Activated CD4-positive, alpha-beta T cell treated with anti-CD3 and anti-CD28 coated beads, Interleukin-2, amount 10 ng/mL, durations not matched to agents 24 days and 14 days (primary cell): ENCODE measurements at regions of chr12 and their contacts with region 1.

Region 1: DNA sequence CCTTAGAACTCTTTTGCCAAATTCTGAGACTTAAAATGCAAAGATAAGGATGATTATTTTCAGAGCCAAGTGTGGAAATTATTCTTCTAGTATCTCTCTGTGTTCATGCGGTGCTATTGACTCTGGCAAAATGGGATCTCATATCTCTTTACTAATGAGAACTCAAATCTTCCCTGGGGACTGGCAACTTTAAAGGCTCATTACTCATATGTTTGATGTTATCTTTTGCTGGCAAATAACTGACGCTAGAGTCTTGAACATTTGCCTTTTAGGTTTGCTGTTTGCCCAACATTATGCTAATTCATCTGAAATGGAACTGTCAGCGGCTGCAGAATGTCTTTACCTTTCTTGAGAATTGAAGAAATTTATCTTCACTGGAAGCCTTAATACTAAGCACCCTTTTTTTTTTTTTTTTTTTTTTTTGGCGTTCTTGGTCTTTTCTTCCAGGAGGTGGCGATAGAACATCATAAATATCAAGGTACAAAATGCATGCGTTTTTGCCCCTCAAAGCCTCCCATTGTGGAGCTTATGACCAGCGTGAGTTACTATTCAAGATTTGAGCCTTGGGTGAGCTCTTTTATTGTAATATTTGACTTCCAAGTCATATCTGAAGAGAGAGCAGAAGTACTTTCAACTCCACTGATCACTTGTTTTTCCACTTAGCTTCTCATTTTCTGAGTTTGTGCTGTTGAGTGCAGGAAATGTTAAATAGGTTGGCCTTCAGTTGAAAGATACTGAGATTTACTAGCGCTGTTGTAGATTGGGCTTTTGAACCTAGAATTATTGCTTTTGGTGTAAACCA is 86.6 kb downstream of the CAND1 start:
- DNase-seq: peak; percentile 71
- H3K4me3 Mint-ChIP-seq: no peak overlapping the region
- H3K27ac Mint-ChIP-seq: no peak overlapping the region
- H3K4me1 Mint-ChIP-seq: peaks cover 15% of the 10 kb centered on the region
- H3K27me3 Mint-ChIP-seq: no peaks in the 10 kb centered on the region

Region 2: DNA sequence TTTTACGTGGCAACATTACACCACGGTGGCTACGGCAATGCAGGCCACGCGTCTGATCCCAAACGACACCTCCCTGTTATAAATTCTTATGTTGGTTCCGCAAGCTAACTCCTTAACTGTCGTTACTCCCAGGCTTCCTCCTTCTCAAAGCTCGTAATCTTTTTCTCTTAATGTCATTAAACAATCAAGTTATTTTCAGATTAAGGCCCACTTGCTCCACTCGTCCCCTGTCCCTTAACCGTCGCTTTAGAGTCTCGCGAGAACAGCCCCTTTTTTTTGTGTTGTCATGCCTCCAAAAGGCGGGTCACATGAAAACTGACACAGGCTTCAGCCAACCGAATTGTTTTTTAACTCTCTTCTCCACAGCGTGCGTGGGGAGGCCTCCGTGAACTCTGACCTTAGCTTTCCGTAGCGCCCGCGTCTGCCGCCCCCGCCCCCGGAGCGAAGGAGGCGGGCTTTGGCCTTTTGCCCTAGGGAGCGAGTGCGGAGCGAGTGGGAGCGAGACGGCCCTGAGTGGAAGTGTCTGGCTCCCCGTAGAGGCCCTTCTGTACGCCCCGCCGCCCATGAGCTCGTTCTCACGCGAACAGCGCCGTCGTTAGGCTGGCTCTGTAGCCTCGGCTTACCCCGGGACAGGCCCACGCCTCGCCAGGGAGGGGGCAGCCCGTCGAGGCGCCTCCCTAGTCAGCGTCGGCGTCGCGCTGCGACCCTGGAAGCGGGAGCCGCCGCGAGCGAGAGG is 86.7 kb before region 1 on chr12 and contains the start of gene CAND1:
- intact Hi-C with region 1: loop called (anchors 1 kb)
- DNase-seq: peak; percentile 99
- H3K4me3 Mint-ChIP-seq: peak within 1 kb of the TSS; percentile 90
- H3K27ac Mint-ChIP-seq: peak within 1 kb of the TSS; percentile 100
- H3K4me1 Mint-ChIP-seq: peaks cover 30% of the 10 kb centered on the region
- H3K27me3 Mint-ChIP-seq: no peaks in the 10 kb centered on the region
- total RNA-seq, gene CAND1: 202 and 216 TPM in 2 replicates

Region 3: DNA sequence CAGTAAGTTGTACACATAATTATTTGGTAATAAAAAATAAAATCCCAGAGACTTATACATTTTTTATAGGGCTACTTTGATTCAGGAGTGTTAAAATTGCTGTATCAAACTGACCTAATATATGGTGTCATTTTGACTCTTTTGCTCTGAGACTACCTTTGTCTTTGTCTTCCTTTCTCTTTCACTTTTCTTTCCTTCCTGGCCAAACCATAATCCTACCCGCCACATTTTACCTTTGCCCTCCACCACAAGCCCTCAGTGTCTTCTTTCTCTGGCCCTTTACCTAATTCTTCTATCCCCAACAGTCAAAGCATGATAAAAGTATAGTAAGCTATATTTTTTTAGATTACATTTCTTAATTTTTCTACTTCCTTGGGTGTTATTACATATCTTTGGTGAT is 24.7 kb before region 1 on chr12:
- intact Hi-C with region 1: no loop called
- DNase-seq: no peak
- H3K4me3 Mint-ChIP-seq: peak overlapping the region; percentile 21
- H3K27ac Mint-ChIP-seq: no peak overlapping the region
- H3K4me1 Mint-ChIP-seq: peaks cover 3% of the 10 kb centered on the region
- H3K27me3 Mint-ChIP-seq: no peaks in the 10 kb centered on the region

Region 4: GRCh38 chr12:67415473-67415872 is 59.7 kb after region 1 on chr12:
- intact Hi-C with region 1: loop called (anchors 2 kb)
- DNase-seq: no peak
- H3K4me3 Mint-ChIP-seq: no peak overlapping the region
- H3K27ac Mint-ChIP-seq: no peak overlapping the region
- H3K4me1 Mint-ChIP-seq: no peaks in the 10 kb centered on the region
- H3K27me3 Mint-ChIP-seq: peaks cover 3% of the 10 kb centered on the region

Region 5: DNA sequence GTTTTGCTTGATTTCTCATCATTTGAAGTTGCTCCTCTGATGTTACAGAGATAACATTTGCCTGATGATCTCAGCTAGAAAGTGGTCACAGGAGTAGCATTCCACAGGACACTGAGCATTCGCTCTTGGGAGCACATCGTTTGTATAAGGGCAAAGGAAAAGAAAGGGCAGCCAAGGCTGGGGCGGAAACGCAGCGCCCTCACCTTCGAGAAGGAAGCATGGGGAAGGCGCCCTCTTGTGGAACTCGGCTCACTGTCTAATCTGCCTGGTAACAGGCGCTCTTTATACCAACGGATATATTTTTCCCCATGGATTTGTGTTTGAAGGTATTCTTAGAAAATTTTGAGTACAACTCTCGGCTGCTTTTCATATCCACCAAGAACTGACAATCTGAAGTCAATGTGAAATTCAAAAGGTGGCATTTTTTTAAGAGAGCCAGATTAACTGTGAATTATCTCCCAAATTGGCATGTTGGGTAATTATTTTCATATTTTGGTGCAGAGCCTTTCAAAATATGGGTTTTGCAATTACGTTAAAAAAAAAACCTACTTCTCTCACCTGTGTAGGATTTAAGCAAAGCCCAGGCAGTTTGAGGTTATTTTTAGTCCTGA is 86.1 kb after region 1 on chr12:
- intact Hi-C with region 1: loop called (anchors 1 kb)
- DNase-seq: peak; percentile 93
- H3K4me3 Mint-ChIP-seq: no peak overlapping the region
- H3K27ac Mint-ChIP-seq: no peak overlapping the region
- H3K4me1 Mint-ChIP-seq: peaks cover 12% of the 10 kb centered on the region
- H3K27me3 Mint-ChIP-seq: peaks cover 13% of the 10 kb centered on the region

Region 6: DNA sequence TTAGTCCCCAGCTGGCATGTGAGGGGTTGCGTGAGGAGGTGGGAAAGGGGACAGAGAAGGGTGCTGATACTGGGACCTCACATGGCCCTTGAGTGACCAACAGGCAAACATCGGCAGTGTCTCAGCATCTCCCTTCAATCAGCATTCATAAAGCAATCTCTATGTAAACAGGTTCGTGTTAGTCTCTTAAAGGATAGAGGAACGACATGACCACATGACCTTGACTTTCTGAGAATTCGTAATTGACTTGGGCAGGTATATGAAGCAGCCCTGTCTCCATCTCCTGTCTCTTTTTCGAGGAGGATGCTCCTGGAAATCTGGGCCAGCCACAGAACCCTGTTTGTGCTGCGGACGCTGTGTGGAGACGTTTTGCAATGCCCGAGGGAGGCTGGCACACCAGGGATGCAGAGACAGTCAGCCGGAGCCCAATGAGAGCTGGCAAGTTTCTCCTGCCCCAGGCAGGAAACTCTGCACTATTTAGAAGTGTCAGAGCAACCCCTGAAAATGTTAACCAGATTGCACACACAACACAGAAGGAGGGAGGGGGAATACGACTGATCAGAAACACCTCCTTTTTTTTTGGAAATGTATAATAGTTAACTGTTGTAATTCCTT is 189.4 kb after region 1 on chr12:
- intact Hi-C with region 1: no loop called
- DNase-seq: no peak
- H3K4me3 Mint-ChIP-seq: no peak overlapping the region
- H3K27ac Mint-ChIP-seq: no peak overlapping the region
- H3K4me1 Mint-ChIP-seq: peaks cover 7% of the 10 kb centered on the region
- H3K27me3 Mint-ChIP-seq: peaks cover 4% of the 10 kb centered on the region

Region 7: DNA sequence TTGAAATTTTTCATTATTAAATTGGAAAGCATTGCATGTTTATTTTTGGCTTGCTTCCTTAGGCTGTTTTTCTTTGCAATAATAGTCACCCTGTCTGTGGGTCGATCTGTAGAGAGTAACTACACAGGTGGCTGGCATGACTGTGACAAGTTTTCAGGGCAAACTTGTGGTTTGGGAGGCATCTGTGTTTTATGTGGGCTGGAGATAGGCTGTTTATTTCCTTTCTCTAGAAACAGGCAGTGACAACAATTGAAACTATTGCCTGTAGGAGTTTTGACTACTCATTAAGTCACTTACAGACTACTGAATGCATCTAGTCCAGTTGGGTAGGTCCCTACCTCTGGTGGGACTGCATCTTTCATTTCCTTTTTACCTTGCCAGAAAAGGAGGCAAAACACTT is 448.4 kb after region 1 on chr12:
- intact Hi-C with region 1: loop called (anchors 10 kb)
- DNase-seq: peak; percentile 80
- H3K4me3 Mint-ChIP-seq: no peak overlapping the region
- H3K27ac Mint-ChIP-seq: no peak overlapping the region
- H3K4me1 Mint-ChIP-seq: peaks cover 11% of the 10 kb centered on the region
- H3K27me3 Mint-ChIP-seq: peaks cover 8% of the 10 kb centered on the region

Region 8: DNA sequence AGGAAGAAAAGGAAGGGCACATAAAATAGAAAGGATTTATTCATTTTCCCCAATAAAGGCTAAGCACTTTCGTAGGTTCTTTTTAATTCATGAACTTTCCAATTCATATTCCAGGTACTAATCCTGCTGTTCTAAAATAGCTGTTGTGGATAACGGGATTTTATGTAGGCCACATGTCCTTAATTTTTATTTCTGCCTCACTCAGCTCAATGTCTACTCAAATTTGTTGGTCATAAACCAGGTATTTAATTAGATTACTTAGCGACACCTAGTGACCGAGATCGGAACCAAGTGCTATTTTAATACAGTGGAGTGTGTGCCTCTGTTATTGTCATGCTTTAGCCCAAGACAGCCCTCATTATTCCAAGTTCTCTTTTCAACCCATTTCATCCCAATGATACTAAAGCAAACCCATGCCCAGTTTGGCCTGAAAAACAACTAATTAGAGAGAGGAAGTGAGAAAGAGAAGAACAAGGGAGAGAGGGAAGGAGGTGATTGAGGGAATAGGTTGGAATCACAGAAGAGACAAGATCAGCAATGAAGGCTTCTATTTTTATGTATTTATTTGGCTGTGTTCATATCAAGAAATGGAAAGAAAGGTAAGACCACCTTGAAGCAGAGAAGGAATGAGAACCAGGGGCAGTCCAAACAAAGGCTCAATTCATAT is 587.6 kb after region 1 on chr12:
- intact Hi-C with region 1: loop called (anchors 1 kb)
- DNase-seq: peak; percentile 89
- H3K4me3 Mint-ChIP-seq: no peak overlapping the region
- H3K27ac Mint-ChIP-seq: no peak overlapping the region
- H3K4me1 Mint-ChIP-seq: no peaks in the 10 kb centered on the region
- H3K27me3 Mint-ChIP-seq: peaks cover 27% of the 10 kb centered on the region

Region 9: DNA sequence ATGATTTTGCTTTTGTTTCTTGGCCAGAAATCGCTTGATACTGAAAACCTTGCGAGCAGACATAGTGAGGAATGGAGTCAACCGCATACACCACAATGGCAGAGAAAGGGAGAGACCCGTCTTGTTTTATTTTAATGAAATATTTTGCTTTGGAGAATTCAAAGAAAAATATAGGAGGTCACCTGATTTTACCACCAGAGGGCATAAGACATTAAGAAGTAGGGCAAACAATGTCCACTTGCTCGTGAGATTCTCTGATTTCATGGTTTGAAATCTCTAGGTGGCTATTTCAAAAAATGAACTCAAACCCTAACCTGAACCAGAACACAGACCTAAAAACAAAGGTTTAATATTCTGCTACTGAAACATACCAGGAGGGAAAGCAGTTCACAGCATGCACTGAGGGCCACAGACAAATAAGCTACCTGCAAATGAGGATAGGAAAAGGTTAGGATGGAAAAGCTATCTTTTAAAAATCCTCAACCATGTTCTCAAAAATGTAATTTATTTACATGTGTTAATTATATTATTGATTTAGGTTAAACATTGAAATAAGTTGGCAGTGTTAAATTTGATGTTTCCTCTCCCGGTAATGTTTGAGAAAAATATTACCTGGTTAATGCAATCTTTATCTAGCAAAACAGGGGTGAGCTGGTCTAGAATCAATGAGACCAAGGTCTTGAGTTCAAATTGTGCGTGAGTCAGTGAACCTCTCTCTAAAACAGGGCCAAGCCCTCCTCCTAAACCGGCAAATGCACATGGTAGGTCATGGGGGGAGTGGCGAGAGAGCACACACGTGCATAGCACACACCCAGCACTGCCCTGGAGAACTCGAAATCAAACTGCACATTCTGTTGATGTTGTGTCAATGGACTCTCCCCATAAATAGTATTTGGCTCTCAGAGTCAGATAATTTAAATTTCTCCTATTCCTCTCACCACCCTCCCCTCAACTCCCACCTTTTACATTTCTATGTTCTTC is 646.0 kb after region 1 on chr12:
- intact Hi-C with region 1: loop called (anchors 5 kb)
- DNase-seq: no peak
- H3K4me3 Mint-ChIP-seq: no peak overlapping the region
- H3K27ac Mint-ChIP-seq: no peak overlapping the region
- H3K4me1 Mint-ChIP-seq: peaks cover 7% of the 10 kb centered on the region
- H3K27me3 Mint-ChIP-seq: no peaks in the 10 kb centered on the region